ENCODE measurements at regions of chr14 and their contacts with region 1.

Region 1: DNA sequence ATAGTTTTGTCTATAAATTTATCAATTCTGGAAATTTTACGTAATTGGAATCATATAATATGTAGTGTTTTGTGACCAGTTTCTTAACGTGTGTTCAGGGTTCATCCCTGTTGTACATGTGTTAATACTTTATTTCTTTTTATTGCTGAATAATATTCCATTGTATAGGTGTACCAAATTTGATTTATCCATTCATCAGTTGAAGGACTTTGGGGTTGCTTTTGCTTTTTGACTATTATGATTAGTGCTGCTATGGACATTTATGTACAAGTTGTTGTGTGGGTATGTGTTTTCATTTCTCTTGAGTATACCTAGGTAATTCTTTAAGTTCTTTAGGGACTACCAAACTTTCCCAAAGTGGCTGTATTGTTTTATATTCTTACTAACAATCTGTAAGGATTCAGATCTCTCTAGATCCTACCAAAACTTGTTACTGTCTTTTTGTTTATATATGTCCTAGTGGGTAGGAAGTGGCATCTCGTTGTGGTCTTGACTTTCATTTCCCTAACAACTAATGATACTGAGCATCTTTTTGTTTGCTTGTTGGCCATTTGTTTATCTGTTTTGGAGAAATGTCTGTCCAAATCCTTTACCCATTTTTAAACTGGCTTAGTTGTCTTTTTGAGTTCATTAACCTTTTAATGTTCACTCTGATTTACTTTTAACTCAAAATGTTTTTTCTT is 14.9 kb downstream of the VRK1 start:
- DNase-seq: no peak
- H3K4me3 ChIP-seq: no peak overlapping the region
- H3K27ac ChIP-seq: no peak overlapping the region
- H3K4me1 ChIP-seq: peaks cover 18% of the 10 kb centered on the region
- H3K27me3 ChIP-seq: no peaks in the 10 kb centered on the region
- CTCF ChIP-seq: no peak

Region 2: DNA sequence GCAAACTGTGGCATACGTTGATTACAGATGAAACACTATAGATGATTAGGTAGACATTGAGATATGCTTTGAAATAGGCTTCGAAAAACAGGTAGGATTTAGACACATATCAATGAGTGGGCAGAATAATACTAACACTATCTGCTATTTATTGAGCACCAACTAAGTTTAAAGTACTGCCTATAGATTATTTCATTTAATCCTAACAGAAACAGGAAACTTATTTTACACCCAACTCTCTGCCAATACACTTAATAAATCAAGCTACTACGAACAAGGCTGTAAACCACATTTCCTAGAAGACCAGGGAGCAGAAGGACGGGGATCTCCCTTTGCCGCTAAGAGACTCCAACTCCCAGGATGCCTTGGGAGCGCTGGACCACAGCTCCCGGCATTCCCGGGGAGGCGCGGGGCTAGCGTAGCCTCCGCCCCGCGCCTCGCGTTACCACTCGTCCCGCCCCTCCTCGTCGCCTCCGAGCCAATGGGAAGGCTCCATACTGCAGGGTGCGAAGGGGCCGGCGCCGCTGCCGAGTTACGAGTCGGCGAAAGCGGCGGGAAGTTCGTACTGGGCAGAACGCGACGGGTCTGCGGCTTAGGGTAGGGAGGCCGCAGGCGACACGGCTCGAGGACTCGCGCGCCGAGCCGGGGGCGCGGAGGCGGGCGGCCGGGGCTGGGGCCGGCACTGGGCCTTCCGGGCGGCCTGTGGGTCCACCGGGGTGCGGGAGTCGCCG is 15.1 kb before region 1 on chr14 and contains the start of gene VRK1:
- CTCF ChIA-PET with region 1: no interaction called
- POLR2A ChIA-PET with region 1: no interaction called
- intact Hi-C with region 1: no loop called
- DNase-seq: peak; percentile 99
- H3K4me3 ChIP-seq: peak within 1 kb of the TSS; percentile 93
- H3K27ac ChIP-seq: peak within 1 kb of the TSS; percentile 91
- H3K4me1 ChIP-seq: peaks cover 29% of the 10 kb centered on the region
- H3K27me3 ChIP-seq: no peaks in the 10 kb centered on the region
- CTCF ChIP-seq: no peak
- total RNA-seq, gene VRK1: 119 and 124 TPM in 2 replicates

Region 3: GRCh38 chr14:97380539-97380941 is 568.4 kb after region 1 on chr14:
- CTCF ChIA-PET with region 1: no interaction called
- POLR2A ChIA-PET with region 1: interaction called, 10 read pairs
- intact Hi-C with region 1: no loop called
- DNase-seq: no peak
- H3K4me3 ChIP-seq: no peak overlapping the region
- H3K27ac ChIP-seq: no peak overlapping the region
- H3K4me1 ChIP-seq: peaks cover 5% of the 10 kb centered on the region
- H3K27me3 ChIP-seq: no peaks in the 10 kb centered on the region
- CTCF ChIP-seq: no peak

Measured in A673 (cell line).